BJ (cell line): ENCODE measurements at regions of chr21 and their contacts with region 1.

Region 1: GRCh38 chr21:26826801-26827200 is 18.4 kb downstream of the ADAMTS1 start:
- DNase-seq: no peak
- H3K4me3 ChIP-seq: no peak overlapping the region
- H3K27me3 ChIP-seq: no peaks in the 10 kb centered on the region
- CTCF ChIP-seq: no peak

Region 2: DNA sequence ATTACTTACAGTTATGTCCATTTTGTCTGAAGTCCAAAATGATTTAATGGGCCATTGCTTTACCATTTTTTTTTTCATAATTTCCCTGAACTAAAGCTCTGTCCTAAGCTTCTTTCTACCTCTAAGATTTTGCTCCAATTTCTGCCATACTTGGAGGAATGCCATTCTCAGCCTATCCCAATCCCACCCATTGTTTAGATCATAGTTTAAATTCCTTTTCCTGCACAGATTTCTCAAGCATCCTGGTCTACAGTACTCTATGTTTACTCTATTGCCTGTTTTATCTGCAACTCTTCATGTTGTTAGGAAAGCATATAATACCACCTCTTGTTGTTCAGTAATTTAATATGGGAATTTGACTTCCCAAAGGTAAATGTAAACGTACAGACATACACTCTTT is 12.4 kb before region 1 on chr21:
- CTCF ChIA-PET with region 1: interaction called, 28 read pairs
- POLR2A ChIA-PET with region 1: no interaction called
- DNase-seq: no peak
- H3K4me3 ChIP-seq: no peak overlapping the region
- H3K27me3 ChIP-seq: no peaks in the 10 kb centered on the region
- CTCF ChIP-seq: no peak